Psoas muscle (tissue), 8 donors: ENCODE measurements at regions of chr11 and their contacts with region 1.

Region 1: DNA sequence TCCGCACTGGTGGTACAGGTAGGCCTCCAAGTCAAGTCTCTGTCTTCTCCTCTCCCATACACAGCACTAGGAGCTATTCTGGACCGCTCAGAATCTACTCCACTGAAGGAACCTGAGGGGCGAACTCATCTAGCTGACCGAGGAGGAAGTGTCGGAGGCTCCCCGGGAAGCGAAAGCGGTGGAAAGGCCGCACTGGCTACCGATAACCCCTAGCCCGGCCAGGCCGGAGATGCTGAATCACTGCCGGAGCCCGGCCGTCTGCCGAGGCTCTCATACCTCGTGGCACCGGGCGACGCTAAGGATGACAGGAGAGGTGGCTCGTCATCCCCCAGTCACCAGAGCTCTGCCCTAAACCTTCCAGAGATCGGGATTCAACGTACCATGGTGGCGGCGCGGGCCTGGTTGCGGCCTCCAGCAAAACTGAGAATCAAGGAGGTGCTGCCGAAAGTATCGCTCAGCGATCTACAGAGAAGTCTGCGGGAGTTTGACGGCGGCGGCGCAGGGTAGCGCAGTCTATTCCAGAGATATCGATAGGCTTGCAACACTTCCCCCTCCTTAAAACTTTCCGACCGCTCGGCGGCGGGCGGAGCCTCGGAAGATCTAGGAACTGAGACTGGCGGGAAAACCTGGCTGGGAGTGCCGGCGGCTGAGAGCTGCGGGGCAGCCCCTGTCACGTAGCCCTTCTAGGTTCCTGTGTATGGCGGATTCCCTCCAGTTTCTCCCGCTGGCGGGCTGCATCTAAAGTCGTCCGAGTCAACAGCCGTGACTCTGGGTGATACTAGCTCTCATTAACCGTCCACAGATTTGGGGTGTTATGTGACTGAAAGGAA is at the start of gene PSMA1:
- DNase-seq: peak; percentile 94 to 97
- ATAC-seq: peak; percentile 96 to 98 (median 98)
- H3K4me3 ChIP-seq: peak within 1 kb of the TSS; percentile 96
- H3K27ac ChIP-seq: peak within 1 kb of the TSS; percentile 94
- H3K4me1 ChIP-seq: peaks cover 12% of the 10 kb centered on the region
- H3K27me3 ChIP-seq: no peaks in the 10 kb centered on the region
- CTCF ChIP-seq: peak; percentile 58
- total RNA-seq, gene PSMA1: 113 to 229 (median 183) TPM

Region 2: GRCh38 chr11:14422052-14422813 is 97.9 kb before region 1 on chr11:
- intact Hi-C with region 1: no loop called
- DNase-seq: peak; percentile 92 to 96
- ATAC-seq: peak; percentile 98 to 100 (median 99)
- H3K4me3 ChIP-seq: peak overlapping the region; percentile 15
- H3K27ac ChIP-seq: peak overlapping the region; percentile 65
- H3K4me1 ChIP-seq: peaks cover 30% of the 10 kb centered on the region
- H3K27me3 ChIP-seq: no peaks in the 10 kb centered on the region
- CTCF ChIP-seq: no peak

Region 3: DNA sequence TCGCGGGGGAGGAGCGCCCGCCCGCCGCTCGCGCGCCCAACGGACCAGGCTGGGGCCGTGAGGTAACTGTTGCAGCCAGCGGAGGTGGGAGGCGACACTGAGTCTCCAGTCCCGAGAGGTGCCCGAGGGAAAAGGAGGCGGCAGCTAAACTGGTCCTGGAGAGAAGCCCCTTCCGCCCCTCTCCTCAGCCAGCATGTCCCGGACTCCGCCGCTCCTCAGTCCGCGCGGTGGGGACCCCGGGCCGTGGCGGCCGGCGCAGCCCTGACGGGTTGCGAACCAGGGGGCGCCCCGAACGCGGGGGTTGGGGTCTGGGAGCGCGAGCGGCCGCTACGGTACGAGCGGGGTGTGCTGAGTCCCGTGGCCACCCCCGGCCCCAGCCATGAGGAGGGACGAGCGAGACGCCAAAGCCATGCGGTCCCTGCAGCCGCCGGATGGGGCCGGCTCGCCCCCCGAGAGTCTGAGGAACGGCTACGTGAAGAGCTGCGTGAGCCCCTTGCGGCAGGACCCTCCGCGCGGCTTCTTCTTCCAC is 123.6 kb after region 1 on chr11 and contains the start of gene PDE3B:
- intact Hi-C with region 1: loop called in 1 of 2 experiments (anchors 10 kb)
- DNase-seq: peak; percentile 68 to 77
- ATAC-seq: peak; percentile 84 to 91 (median 88)
- H3K4me3 ChIP-seq: peak within 1 kb of the TSS; percentile 87
- H3K27ac ChIP-seq: no peak within 1 kb of the TSS
- H3K4me1 ChIP-seq: peaks cover 3% of the 10 kb centered on the region
- H3K27me3 ChIP-seq: peaks cover 0 to 22% (median 0%) of the 10 kb centered on the region in 3 donors
- CTCF ChIP-seq: no peak
- total RNA-seq, gene PDE3B: 0.26 to 0.59 (median 0.33) TPM

Region 4: GRCh38 chr11:14668731-14669301 is 148.7 kb after region 1 on chr11:
- intact Hi-C with region 1: no loop called
- DNase-seq: no peak
- ATAC-seq: no peak
- H3K4me3 ChIP-seq: no peak overlapping the region
- H3K27ac ChIP-seq: no peak overlapping the region
- H3K4me1 ChIP-seq: no peaks in the 10 kb centered on the region
- H3K27me3 ChIP-seq: no peaks in the 10 kb centered on the region
- CTCF ChIP-seq: no peak

Region 5: DNA sequence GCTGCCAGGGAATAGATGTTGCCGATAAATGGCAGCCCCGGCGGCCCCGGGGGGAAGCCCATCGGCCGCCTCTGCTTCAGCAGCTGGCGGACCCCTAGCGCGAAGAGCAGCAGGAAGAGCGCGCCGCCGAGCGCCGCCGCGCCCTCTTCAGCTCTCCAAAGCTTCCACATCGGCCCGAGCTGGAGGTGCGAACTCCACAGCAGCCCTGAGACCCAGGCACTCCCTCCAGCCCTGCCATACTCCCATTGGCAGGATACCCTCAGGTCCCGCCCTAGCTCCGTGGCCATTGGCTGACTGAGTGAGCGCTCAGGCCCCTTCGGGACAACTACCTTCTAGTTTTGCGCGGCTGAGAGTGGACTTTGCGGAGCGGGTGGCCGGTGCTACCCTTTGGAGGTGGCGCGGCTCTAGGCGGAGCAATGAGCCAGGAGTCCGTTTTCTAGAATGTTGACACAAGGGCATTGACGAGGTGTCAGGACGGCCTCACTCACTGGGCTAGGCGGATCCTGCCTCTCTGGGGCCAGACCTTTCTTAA is 372.0 kb after region 1 on chr11 and contains the start of gene CYP2R1:
- intact Hi-C with region 1: loop called (anchors 5 kb)
- DNase-seq: peak; percentile 94 to 96
- ATAC-seq: peak; percentile 97 to 99 (median 98)
- H3K4me3 ChIP-seq: peak within 1 kb of the TSS; percentile 72
- H3K27ac ChIP-seq: peak within 1 kb of the TSS; percentile 87
- H3K4me1 ChIP-seq: peaks cover 3% of the 10 kb centered on the region
- H3K27me3 ChIP-seq: no peaks in the 10 kb centered on the region
- CTCF ChIP-seq: no peak
- total RNA-seq, gene CYP2R1: 5.2 to 7.9 (median 7.0) TPM